A549 (cell line): ENCODE measurements at regions of chr17 and their contacts with region 1.

Region 1: GRCh38 chr17:43316522-43317142 is 82.2 kb upstream of the ARL4D start:
- DNase-seq: no peak
- ATAC-seq: 0 out of 6 replicates have a peak, but pooled peaks of 1 of the 2 experiments have one; percentile 3
- H3K4me3 ChIP-seq: no peak overlapping the region
- H3K27ac ChIP-seq: no peak overlapping the region
- H3K4me1 ChIP-seq: no peaks in the 10 kb centered on the region
- CTCF ChIP-seq: no peak
- EP300 ChIP-seq: no peak
- POLR2A ChIP-seq: no peak
- RAD21 ChIP-seq: no peak

Region 2: DNA sequence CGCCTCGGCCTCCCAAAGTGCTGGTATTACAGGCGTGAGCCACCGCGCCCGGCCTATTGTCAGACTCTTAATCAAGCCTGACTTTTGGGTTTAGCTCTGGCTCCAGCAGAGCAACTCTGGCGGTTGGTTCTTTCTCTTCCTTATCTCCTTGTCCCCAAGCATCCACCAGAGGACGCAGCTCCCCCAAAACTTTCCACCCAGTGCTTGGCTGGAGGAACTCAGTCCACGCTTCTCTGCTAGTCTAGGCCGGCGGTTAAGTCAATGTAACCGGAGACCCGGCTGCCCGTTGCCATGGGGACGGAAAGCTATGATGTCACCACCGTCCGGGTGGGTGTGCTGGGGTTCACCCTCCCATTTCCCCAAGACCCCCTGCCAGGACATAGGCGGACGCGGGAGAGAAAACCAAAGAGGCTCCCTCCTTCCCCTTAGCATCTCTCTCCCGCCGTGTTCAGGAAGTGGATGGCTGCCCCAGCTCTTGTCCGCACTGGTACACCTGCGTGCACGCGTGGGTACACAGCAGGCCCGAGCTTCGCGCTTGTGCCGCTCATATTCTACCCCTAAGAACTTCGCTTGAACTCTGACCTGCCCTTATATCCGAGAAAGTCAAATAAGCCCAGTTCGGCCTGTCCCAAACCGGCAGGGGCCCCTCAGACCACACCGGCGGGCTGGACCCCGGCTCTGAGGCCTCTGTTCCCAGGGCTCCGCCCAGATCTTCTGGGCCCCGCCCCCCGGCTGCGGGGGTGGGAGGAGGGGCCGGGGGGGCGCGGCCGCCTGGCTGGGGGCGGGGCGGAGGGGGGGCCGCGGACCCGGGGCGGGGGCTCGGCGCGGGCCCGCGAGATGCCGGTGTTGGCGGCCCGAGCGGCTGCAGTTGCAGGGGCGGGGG is 292.0 kb before region 1 on chr17 and contains the start of gene RND2:
- CTCF ChIA-PET with region 1: interaction called, 8 read pairs
- POLR2A ChIA-PET with region 1: interaction called, 18 read pairs
- DNase-seq: peak; percentile 96 to 99
- ATAC-seq: peak; percentile 52 to 69
- H3K4me3 ChIP-seq: peak within 1 kb of the TSS; percentile 53
- H3K27ac ChIP-seq: peak within 1 kb of the TSS; percentile 78 to 88
- H3K4me1 ChIP-seq: peaks cover 21% of the 10 kb centered on the region
- CTCF ChIP-seq: peak; percentile 73
- EP300 ChIP-seq: no peak
- POLR2A ChIP-seq: peak; percentile 46
- RAD21 ChIP-seq: peak; percentile 79 to 81
- polyA plus RNA-seq, gene RND2: 0.19 and 0.33 TPM in 2 replicates

Region 3: DNA sequence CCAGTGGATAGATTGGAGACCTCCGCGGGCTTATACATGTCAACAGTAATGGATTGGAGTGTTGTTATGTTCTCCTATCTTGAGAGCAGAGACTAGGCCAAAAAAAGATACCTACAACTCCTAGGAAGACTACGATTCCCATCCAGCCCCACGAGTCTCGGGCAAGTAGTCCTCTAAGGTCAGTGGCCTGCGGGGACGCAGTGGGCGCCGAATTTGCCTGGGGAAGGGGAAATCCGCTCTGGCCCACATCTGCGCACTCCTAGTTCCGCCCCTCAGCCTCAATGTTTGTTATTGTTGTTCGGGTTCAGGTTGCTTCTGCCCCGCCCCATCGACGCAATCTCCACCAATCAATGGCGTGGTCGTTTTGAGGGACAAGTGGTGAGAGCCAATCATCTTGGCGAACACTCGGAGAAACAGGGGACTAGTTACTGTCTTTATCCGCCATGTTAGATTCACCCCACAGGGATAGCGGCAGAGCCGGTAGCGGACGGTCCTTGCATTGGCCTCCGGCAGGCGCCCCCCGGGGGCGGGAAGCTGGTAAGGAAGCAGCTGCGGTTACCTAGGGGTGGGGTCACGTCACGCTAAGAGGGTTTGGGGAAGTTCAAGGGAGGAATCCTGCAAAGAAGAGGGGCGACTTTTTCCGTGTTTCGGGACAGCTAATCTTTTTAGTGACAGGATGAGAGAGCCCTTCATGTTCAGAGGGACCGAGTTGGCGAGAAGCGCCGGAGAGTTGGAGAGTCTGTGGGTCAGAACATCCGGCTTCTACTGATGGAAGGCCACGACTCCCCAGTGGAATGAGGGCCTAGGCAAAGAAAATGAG is 145.7 kb before region 1 on chr17 and contains the start of gene NBR1:
- CTCF ChIA-PET with region 1: interaction called, 7 read pairs
- POLR2A ChIA-PET with region 1: interaction called, 48 read pairs
- DNase-seq: peak; percentile 99 to 100
- ATAC-seq: peak; percentile 86 to 90
- H3K4me3 ChIP-seq: peak within 1 kb of the TSS; percentile 74
- H3K27ac ChIP-seq: peak within 1 kb of the TSS; percentile 86 to 90
- H3K4me1 ChIP-seq: peaks cover 43% of the 10 kb centered on the region
- CTCF ChIP-seq: no peak; the same call in 2 of the 3 replicates
- EP300 ChIP-seq: no peak
- POLR2A ChIP-seq: peak; percentile 2; the same call in 1 of the 2 replicates
- RAD21 ChIP-seq: no peak
- polyA plus RNA-seq, gene NBR1: 86.8 and 103 TPM in 2 replicates

Region 4: GRCh38 chr17:43211480-43212402 is 104.9 kb before region 1 on chr17 and contains the start of gene TMEM106A:
- CTCF ChIA-PET with region 1: interaction called, 6 read pairs
- POLR2A ChIA-PET with region 1: interaction called, 52 read pairs
- DNase-seq: peak; percentile 84 to 97
- ATAC-seq: peak; percentile 90 to 92
- H3K4me3 ChIP-seq: peak within 1 kb of the TSS; percentile 51
- H3K27ac ChIP-seq: peak within 1 kb of the TSS; percentile 75 to 84
- H3K4me1 ChIP-seq: peaks cover 14% of the 10 kb centered on the region
- CTCF ChIP-seq: no peak
- EP300 ChIP-seq: no peak
- POLR2A ChIP-seq: peak; percentile 47
- RAD21 ChIP-seq: 0 out of 5 replicates have a peak, but pooled peaks of 1 of the 2 experiments have one; percentile 16
- polyA plus RNA-seq, gene TMEM106A: 2.6 and 3.5 TPM in 2 replicates

Region 5: DNA sequence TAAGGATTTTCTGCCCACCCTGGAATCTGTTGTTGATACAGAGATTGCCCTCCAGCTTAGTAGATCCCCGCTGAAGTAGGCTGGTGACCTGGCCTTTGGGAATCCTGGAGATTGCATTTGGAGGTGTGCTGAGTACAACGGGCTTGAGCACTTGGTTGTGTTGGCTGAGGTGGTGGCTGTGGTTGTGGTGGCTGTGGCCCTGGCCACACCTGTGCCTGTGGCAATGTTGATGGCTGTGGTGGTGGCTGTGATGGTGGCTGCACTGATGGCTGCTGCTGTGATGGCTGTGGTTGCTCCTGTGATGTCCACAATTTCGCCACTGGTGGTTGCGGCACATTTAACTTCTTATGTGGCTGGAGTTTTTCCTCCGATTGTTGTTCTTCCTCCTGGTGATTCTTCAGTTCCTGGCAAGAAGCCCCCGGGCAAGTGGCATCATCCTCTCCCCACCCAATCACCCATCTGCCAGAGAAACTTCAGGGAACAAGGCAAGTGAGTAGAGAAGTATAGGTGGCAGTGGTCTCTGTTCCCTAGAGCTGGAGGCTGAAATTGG is 92.4 kb before region 1 on chr17:
- CTCF ChIA-PET with region 1: interaction called, 3 read pairs
- POLR2A ChIA-PET with region 1: interaction called, 30 read pairs
- DNase-seq: no peak
- ATAC-seq: no peak
- H3K4me3 ChIP-seq: no peak overlapping the region
- H3K27ac ChIP-seq: no peak overlapping the region
- H3K4me1 ChIP-seq: no peaks in the 10 kb centered on the region
- CTCF ChIP-seq: no peak
- EP300 ChIP-seq: no peak
- POLR2A ChIP-seq: no peak
- RAD21 ChIP-seq: no peak

Region 6: DNA sequence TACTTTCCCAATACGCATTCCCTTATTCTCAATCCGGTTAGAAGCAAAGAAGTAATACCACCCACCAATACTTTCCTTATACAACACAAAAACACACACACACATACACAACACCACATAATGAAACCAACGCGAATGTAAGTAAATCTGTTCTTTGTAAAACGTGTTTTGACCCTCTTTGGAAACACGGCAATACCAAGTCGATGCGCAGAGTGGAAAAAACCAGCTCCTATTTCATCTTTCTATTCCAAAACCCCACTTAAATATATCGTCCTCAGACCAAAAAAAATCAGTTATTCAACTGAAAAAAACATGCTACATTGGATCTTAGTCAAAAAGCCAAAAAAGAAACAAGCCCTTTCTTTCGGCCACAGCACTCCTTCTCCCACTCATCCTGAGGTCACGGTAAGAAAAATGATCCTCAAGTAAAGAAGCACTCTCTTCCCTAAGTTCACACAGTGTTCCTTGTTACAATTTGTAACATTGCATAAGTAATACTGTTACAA is 51.2 kb after region 1 on chr17:
- CTCF ChIA-PET with region 1: no interaction called
- POLR2A ChIA-PET with region 1: interaction called, 25 read pairs
- DNase-seq: peak; percentile 90 to 92
- ATAC-seq: peak; percentile 70 to 74
- H3K4me3 ChIP-seq: peak overlapping the region; percentile 44; the same call in 2 of the 3 replicates
- H3K27ac ChIP-seq: peak overlapping the region; percentile 94
- H3K4me1 ChIP-seq: peaks cover 22% of the 10 kb centered on the region
- CTCF ChIP-seq: no peak
- EP300 ChIP-seq: no peak
- POLR2A ChIP-seq: peak; percentile 97
- RAD21 ChIP-seq: no peak; a peak in 1 of 5 replicates

Region 7: DNA sequence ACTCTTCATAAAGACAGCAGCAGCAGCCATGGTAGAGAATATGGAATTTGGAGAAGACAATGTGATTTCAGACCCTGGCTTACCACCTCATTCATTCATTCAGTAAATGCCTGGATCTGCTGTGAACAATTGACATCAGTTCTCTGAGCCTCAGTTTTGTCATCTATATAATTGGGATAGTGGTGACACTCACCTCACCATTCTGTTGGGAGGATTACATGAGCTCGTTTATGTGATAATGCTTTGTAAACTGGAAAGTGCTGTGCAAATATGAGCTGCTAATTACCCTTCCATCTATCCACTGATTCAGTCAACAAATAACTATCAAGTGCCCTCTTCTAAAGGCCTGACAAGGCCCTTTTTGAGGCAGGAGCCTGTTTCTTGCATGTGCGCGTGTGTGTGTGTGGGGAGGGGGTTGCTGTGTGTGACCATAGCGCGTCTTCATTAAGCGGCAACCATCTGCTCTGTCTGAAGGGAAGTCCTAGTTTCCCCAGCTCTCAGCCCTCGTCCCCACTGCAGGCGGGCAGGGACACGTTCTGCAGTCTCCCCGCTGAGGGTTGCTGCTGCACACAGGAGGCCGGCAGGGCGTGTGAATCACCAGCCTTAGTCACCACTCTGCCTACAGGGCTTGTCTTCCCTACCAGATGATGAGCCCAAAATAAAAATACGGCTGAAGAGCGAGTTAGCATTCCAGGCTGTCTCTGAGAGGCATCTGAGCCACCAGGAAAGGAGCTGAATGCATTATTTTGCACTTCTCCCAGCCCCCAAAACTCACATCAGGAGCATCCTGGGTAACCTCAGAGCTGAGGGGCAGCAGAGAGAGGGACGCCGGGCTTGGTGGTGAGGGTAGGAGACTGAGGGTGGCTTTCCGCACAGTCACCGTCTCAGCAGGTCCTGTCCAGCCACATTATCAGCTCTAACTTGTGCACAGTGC is 102.1 kb after region 1 on chr17:
- CTCF ChIA-PET with region 1: no interaction called
- POLR2A ChIA-PET with region 1: no interaction called
- DNase-seq: peak; percentile 88 to 97
- ATAC-seq: peak; percentile 98 to 99
- H3K4me3 ChIP-seq: no peak overlapping the region
- H3K27ac ChIP-seq: peak overlapping the region; percentile 81 to 85
- H3K4me1 ChIP-seq: peaks cover 36% of the 10 kb centered on the region
- CTCF ChIP-seq: 0 out of 3 replicates have a peak, but pooled peaks have one; percentile 8
- EP300 ChIP-seq: no peak
- POLR2A ChIP-seq: peak; percentile 37
- RAD21 ChIP-seq: peak; percentile 47 to 51; a peak in 4 of 5 replicates

Region 8: DNA sequence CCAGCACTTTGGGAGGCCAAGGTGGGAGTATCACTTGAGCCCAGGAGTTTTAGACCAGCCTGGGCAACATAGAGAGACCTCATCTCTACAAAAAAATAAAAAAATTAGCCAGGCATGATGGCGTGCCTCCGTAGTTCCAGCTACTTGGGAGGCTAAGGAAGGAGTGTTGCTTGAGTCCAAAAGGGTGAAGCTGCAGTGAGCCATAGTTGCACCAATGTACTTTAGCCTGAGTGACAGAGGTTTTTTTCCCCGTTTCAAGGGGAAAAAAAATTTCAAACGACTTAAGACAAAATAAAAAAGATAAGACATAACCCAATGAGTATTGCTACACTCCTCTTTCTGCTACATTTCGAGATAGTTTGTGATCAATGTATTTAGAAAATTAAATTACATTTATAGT is 174.0 kb after region 1 on chr17:
- CTCF ChIA-PET with region 1: no interaction called
- POLR2A ChIA-PET with region 1: no interaction called
- DNase-seq: no peak
- ATAC-seq: no peak
- H3K4me3 ChIP-seq: no peak overlapping the region
- H3K27ac ChIP-seq: no peak overlapping the region
- H3K4me1 ChIP-seq: peaks cover 18% of the 10 kb centered on the region
- CTCF ChIP-seq: no peak
- EP300 ChIP-seq: no peak
- POLR2A ChIP-seq: no peak
- RAD21 ChIP-seq: no peak